T-cell (primary cell): ENCODE measurements at regions of chr5 and their contacts with region 1.

Region 1: DNA sequence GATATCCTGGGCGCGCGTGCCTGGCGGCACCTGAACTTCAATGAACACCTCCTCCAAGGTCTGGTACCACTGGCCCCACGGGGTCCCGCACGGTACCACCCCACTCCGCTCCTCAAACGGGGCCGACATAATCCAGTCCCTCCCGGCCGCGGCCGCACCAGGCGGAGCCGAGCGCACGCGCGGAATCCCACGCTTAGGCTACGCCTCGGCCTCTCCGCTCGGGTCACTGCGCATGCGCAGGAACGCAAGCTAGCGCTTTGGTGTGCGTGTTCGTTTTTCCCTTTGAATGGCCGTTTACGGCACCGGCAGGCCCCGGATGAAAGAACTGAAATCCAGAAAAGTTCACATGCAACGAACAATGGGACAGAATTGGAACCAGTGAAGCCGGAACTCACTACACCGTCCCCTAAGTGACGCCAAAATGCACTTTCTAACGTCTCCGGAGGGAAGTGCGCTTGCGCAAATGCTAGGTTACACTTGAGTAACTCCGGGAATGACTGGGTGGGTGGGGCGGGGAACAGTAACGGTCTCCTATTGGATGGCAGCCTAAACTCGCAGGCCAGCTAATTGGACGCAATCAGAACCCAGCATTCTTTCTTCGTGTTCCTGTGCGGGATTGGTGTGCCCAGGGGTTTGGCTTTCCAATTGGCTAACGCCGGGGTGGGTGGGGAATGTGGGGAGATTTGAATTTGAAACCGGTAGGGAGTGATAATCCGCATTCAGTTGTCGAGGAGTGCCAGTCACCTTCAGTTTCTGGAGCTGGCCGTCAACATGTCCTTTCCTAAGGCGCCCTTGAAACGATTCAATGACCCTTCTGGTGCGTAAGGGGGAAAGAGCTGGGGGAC is at the starts of genes HMMR and NUDCD2:
- DNase-seq: peak; percentile 89 to 97 (median 93)
- ATAC-seq: peak; percentile 84 to 88 (median 86)
- H3K4me3 ChIP-seq: peak within 1 kb of the TSS; percentile 80 to 95
- H3K4me3 Mint-ChIP-seq: peak within 1 kb of the TSS; percentile 93 to 98 (median 96)
- H3K27ac ChIP-seq: peak within 1 kb of the TSS; percentile 94
- H3K27ac Mint-ChIP-seq: peak within 1 kb of the TSS; percentile 98 to 99
- H3K4me1 ChIP-seq: peaks cover 22 to 28% of the 10 kb centered on the region in 2 experiments
- H3K4me1 Mint-ChIP-seq: peaks cover 49 to 61% (median 51%) of the 10 kb centered on the region in 3 donors
- H3K27me3 ChIP-seq: no peaks in the 10 kb centered on the region
- H3K27me3 Mint-ChIP-seq: no peaks in the 10 kb centered on the region
- total RNA-seq, gene HMMR: 0.41 to 0.88 (median 0.84) TPM
- total RNA-seq, gene NUDCD2: 18.9 to 29.9 (median 29.3) TPM

Region 2: GRCh38 chr5:163437309-163438182 is 22.6 kb before region 1 on chr5 and contains the start of gene CCNG1:
- CTCF ChIA-PET with region 1: interaction called, 6 to 55 read pairs
- POLR2A ChIA-PET with region 1: interaction called in 1 of 2 experiments, 14 read pairs
- DNase-seq: peak; percentile 75 to 93 (median 83)
- ATAC-seq: peak; percentile 95 to 97 (median 96)
- H3K4me3 ChIP-seq: peak within 1 kb of the TSS; percentile 93 to 98
- H3K4me3 Mint-ChIP-seq: peak within 1 kb of the TSS; percentile 88 to 89 (median 89)
- H3K27ac ChIP-seq: peak within 1 kb of the TSS; percentile 87
- H3K27ac Mint-ChIP-seq: peak within 1 kb of the TSS; percentile 90 to 95
- H3K4me1 ChIP-seq: peaks cover 16 to 18% of the 10 kb centered on the region in 2 experiments
- H3K4me1 Mint-ChIP-seq: peaks cover 38 to 48% (median 46%) of the 10 kb centered on the region in 3 donors
- H3K27me3 ChIP-seq: no peaks in the 10 kb centered on the region
- H3K27me3 Mint-ChIP-seq: no peaks in the 10 kb centered on the region
- total RNA-seq, gene CCNG1: 108 to 129 (median 112) TPM

Region 3: DNA sequence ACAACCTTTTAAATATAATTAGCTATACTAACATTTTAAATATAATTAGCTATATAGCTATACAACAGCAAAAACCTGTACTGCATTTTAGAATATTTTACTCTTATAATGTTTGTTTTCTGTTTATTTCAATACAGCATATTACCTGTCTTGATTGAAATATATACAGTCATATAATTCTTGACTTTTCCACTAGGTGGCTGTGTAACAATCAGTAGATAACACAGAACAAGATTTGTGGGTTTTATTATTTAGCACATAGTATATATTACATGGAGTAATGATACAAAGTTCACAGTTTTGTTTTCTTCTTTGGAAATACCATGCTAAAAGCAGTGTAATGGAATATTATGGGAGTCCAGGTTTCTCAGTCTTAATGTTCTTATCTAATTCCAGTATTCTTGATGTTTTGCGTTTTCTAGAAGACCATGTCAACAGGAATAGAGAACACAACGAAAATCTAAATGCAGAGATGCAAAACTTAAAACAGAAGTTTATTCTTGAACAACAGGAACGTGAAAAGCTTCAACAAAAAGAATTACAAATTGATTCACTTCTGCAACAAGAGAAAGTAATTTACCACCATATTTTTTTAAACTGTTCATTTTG is 13.6 kb after region 1 on chr5:
- CTCF ChIA-PET with region 1: interaction called, 4 to 37 read pairs
- POLR2A ChIA-PET with region 1: interaction called in 1 of 2 experiments, 5 read pairs
- DNase-seq: peak in 1 of 35 experiments; percentile 59
- ATAC-seq: peak in 3 of 4 experiments; percentile 52 to 87 (median 76)
- H3K4me3 ChIP-seq: no peak overlapping the region
- H3K4me3 Mint-ChIP-seq: no peak overlapping the region
- H3K27ac ChIP-seq: no peak overlapping the region
- H3K27ac Mint-ChIP-seq: no peak overlapping the region
- H3K4me1 ChIP-seq: no peaks in the 10 kb centered on the region
- H3K4me1 Mint-ChIP-seq: peaks cover 0 to 6% (median 1%) of the 10 kb centered on the region in 3 donors
- H3K27me3 ChIP-seq: no peaks in the 10 kb centered on the region
- H3K27me3 Mint-ChIP-seq: no peaks in the 10 kb centered on the region

Region 4: DNA sequence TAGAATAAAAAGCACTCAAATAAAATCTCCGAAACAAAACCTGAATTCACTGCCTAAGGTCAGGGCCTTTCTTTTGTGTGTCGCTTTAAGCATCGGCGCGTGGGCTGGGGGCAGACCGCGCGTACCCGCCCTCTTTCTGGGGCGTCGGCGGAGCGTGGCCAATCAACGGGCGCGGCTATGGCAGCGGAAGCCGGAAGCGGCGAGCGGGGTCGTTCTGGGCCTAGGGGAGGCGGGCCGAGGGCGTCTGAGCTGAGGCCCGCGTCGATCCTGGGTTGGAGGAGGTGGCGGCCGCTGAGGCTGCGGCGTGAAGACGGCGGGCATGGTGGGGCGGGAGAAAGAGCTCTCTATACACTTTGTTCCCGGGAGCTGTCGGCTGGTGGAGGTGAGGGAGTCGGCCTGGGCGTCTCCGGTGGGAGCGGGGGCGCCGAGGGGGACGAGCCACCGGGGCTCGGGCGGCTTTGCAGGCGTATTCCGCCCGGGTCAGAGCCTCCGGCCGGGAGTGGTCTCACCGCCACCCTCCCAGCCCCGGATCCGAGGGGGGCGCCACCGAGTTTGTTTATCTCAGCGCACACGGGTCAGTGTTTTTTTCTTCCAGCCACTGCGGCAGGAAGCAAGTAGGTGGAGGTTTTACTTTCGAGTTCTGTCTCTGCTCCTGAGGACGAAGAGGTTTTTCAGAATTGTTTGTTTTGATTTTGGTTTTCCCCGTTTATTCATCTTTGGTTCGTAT is 45.4 kb after region 1 on chr5 and contains the start of gene MAT2B:
- CTCF ChIA-PET with region 1: interaction called, 8 to 38 read pairs
- POLR2A ChIA-PET with region 1: interaction called, 3 to 29 read pairs
- DNase-seq: peak; percentile 86 to 98 (median 96)
- ATAC-seq: peak; percentile 89 to 92 (median 91)
- H3K4me3 ChIP-seq: peak within 1 kb of the TSS; percentile 66 to 98
- H3K4me3 Mint-ChIP-seq: peak within 1 kb of the TSS; percentile 94 to 98 (median 96)
- H3K27ac ChIP-seq: peak within 1 kb of the TSS; percentile 88
- H3K27ac Mint-ChIP-seq: peak within 1 kb of the TSS; percentile 99 to 100
- H3K4me1 ChIP-seq: peaks cover 19 to 33% of the 10 kb centered on the region in 2 experiments
- H3K4me1 Mint-ChIP-seq: peaks cover 49 to 73% (median 54%) of the 10 kb centered on the region in 3 donors
- H3K27me3 ChIP-seq: no peaks in the 10 kb centered on the region
- H3K27me3 Mint-ChIP-seq: no peaks in the 10 kb centered on the region
- total RNA-seq, gene MAT2B: 62.2 to 131 (median 115) TPM

Region 5: DNA sequence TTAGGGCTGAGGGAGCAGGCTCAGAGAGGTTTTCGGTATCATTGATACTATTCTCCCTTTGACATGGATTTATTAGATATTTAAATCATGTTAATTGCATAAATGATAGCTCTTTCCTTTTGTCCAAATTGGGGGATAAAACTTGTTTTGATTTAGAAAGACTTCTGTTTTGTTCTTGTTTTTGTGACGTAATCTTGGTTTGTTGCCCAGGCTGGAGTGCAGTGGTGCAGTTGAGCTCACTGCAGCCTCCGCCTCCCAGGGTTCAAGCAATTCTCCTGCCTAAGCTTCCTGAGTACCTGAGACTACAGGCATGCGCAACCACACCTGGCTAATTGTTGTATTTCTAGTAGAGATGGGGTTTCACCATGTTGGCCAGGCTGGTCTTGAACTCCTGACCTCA is 52.4 kb after region 1 on chr5:
- CTCF ChIA-PET with region 1: interaction called, 4 to 18 read pairs
- POLR2A ChIA-PET with region 1: interaction called, 7 to 25 read pairs
- DNase-seq: no peak
- ATAC-seq: no peak
- H3K4me3 ChIP-seq: no peak overlapping the region
- H3K4me3 Mint-ChIP-seq: peak overlapping the region; percentile 43 to 69 (median 43)
- H3K27ac ChIP-seq: no peak overlapping the region
- H3K27ac Mint-ChIP-seq: peak overlapping the region; percentile 67 to 76
- H3K4me1 ChIP-seq: peaks cover 22 to 29% of the 10 kb centered on the region in 2 experiments
- H3K4me1 Mint-ChIP-seq: peaks cover 53 to 81% (median 81%) of the 10 kb centered on the region in 3 donors
- H3K27me3 ChIP-seq: no peaks in the 10 kb centered on the region
- H3K27me3 Mint-ChIP-seq: no peaks in the 10 kb centered on the region